Aorta (tissue), 5 donors: ENCODE measurements at regions of chrX and their contacts with region 1.

Region 1: DNA sequence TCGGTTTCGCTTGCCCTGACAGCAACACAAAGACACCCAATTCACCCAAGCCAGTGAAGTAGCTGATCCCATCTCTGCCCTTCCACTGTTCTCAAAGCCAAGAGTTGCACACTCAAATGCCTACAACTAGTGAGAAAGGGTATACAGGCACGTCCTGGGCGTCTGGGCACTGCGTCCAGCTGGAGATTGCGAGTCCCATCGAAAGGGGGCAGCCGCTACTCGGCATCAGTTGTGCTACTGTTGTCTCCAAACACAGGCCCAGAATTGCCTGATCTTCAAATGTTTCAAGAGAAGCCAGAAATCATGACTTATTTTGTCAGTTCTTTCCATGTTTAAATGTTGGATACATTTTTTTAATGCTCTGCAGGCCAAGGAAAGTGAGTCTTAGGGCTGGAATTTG is 487.8 kb downstream of the BCOR start:
- DNase-seq: no peak
- ATAC-seq: no peak
- H3K4me3 ChIP-seq: no peak overlapping the region
- H3K27ac ChIP-seq: no peak overlapping the region
- H3K4me1 ChIP-seq: no peaks in the 10 kb centered on the region
- H3K27me3 ChIP-seq: no peaks in the 10 kb centered on the region

Region 2: GRCh38 chrX:39645178-39645895 is 35.4 kb after region 1 on chrX:
- intact Hi-C with region 1: loop called in 1 of 2 experiments (anchors 2 kb)
- DNase-seq: peak; percentile 90 to 91
- ATAC-seq: peak; percentile 83
- H3K4me3 ChIP-seq: no peak overlapping the region
- H3K27ac ChIP-seq: peak overlapping the region in 1 of 2 donors; percentile 80
- H3K4me1 ChIP-seq: no peaks in the 10 kb centered on the region
- H3K27me3 ChIP-seq: no peaks in the 10 kb centered on the region

Region 3: DNA sequence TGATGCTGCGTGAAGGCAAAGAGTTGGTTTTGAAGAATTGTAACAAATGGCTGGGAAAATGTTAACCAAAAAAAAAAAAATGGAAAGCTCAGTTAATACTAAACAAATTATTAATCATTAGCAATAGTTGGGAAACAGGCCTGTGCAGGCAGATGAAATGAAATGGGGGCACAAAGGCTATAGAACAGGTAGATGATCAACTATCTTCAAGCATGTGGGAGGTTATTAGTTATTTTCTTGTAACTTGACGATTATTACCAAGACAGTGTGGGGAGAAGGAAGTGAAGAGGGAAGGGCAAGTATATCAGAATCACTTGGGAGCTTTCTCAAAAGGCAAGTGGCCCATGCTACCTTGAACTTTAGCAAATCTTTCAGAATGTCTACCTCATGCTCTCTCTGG is 135.9 kb after region 1 on chrX:
- intact Hi-C with region 1: no loop called
- DNase-seq: no peak
- ATAC-seq: no peak
- H3K4me3 ChIP-seq: no peak overlapping the region
- H3K27ac ChIP-seq: no peak overlapping the region
- H3K4me1 ChIP-seq: peaks cover 0 to 3% of the 10 kb centered on the region in 2 donors
- H3K27me3 ChIP-seq: no peaks in the 10 kb centered on the region